Caco-2 (cell line): ENCODE measurements at regions of chr20 and their contacts with region 1.

Region 1: GRCh38 chr20:22691369-22692118 is 107.2 kb upstream of the FOXA2 start:
- DNase-seq: peak; percentile 81 to 83
- H3K4me3 ChIP-seq: no peak overlapping the region
- H3K4me3 Mint-ChIP-seq: no peak overlapping the region
- H3K27ac Mint-ChIP-seq: no peak overlapping the region
- H3K4me1 ChIP-seq: peaks cover 6% of the 10 kb centered on the region; the same call in 1 of the 2 replicates
- H3K4me1 Mint-ChIP-seq: peaks cover 2% of the 10 kb centered on the region
- H3K27me3 ChIP-seq: no peaks in the 10 kb centered on the region
- H3K27me3 Mint-ChIP-seq: no peaks in the 10 kb centered on the region
- CTCF ChIP-seq: peak; percentile 83 to 96

Region 2: GRCh38 chr20:22805219-22805618 is 113.7 kb after region 1 on chr20:
- CTCF ChIA-PET with region 1: interaction called, 5 read pairs
- POLR2A ChIA-PET with region 1: interaction called, 3 read pairs
- intact Hi-C with region 1: loop called (anchors 5 kb)
- DNase-seq: peak in 1 of 2 experiments; percentile 29
- H3K4me3 ChIP-seq: no peak overlapping the region
- H3K4me3 Mint-ChIP-seq: no peak overlapping the region
- H3K27ac Mint-ChIP-seq: no peak overlapping the region
- H3K4me1 ChIP-seq: peaks cover 38% of the 10 kb centered on the region
- H3K4me1 Mint-ChIP-seq: peaks cover 36% of the 10 kb centered on the region
- H3K27me3 ChIP-seq: no peaks in the 10 kb centered on the region
- H3K27me3 Mint-ChIP-seq: no peaks in the 10 kb centered on the region
- CTCF ChIP-seq: no peak

Region 3: GRCh38 chr20:22833851-22834250 is 142.3 kb after region 1 on chr20:
- CTCF ChIA-PET with region 1: no interaction called
- POLR2A ChIA-PET with region 1: no interaction called
- intact Hi-C with region 1: no loop called
- DNase-seq: peak; percentile 31 to 61
- H3K4me3 ChIP-seq: no peak overlapping the region
- H3K4me3 Mint-ChIP-seq: peak overlapping the region; percentile 9
- H3K27ac Mint-ChIP-seq: peak overlapping the region; percentile 12
- H3K4me1 ChIP-seq: peaks cover 43% of the 10 kb centered on the region
- H3K4me1 Mint-ChIP-seq: peaks cover 43% of the 10 kb centered on the region
- H3K27me3 ChIP-seq: no peaks in the 10 kb centered on the region
- H3K27me3 Mint-ChIP-seq: no peaks in the 10 kb centered on the region
- CTCF ChIP-seq: no peak

Region 4: DNA sequence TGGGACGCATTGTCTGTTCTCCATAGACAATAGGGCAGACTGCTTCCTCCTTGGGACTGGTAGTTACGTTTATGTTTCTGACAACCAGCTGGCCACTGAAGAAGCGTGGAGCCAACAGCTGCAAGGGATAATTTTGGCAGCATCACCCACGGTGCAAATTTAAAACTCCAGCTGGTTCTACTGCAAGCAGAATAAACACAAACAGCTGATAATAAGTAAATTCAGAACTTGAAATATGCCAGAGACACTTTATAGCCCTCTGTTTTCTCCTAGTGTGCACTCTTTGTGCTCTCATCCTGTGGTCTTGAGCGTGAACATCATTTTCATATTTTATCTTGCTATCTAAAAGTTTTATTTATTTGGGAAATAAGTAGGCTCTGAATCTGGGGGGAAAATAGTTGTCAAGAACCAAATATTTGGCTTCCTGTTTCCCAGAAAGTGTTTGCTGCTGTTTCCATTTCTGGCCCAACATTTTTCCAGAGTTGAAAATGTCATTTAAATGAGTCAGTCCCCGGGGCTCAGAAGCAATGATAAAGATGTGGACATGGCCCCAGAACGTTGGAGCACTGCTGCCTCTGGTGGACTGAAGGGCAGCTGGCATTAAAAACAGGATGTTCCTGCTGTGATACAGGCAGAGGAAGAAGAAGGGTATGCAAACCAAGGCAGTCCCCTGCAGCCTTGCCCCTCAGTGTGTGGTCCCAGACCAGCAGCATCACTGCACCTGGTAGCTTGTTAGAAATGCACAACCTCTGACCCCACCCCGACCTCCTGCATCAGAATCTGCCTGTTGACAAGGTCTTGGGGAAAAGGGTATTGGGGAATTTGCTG is 370.4 kb after region 1 on chr20:
- CTCF ChIA-PET with region 1: interaction called, 8 read pairs
- POLR2A ChIA-PET with region 1: no interaction called
- intact Hi-C with region 1: loop called (anchors 5 kb)
- DNase-seq: peak; percentile 49 to 53
- H3K4me3 ChIP-seq: no peak overlapping the region
- H3K4me3 Mint-ChIP-seq: no peak overlapping the region
- H3K27ac Mint-ChIP-seq: peak overlapping the region; percentile 39
- H3K4me1 ChIP-seq: peaks cover 58% of the 10 kb centered on the region
- H3K4me1 Mint-ChIP-seq: peaks cover 40% of the 10 kb centered on the region
- H3K27me3 ChIP-seq: no peaks in the 10 kb centered on the region
- H3K27me3 Mint-ChIP-seq: no peaks in the 10 kb centered on the region
- CTCF ChIP-seq: peak; percentile 35 to 39

Region 5: GRCh38 chr20:23340524-23340923 is 649.0 kb after region 1 on chr20:
- CTCF ChIA-PET with region 1: interaction called, 36 read pairs
- POLR2A ChIA-PET with region 1: no interaction called
- intact Hi-C with region 1: loop called (anchors 1 kb)
- DNase-seq: peak; percentile 84 to 86
- H3K4me3 ChIP-seq: no peak overlapping the region
- H3K4me3 Mint-ChIP-seq: no peak overlapping the region
- H3K27ac Mint-ChIP-seq: no peak overlapping the region
- H3K4me1 ChIP-seq: peaks cover 8% of the 10 kb centered on the region; the same call in 1 of the 2 replicates
- H3K4me1 Mint-ChIP-seq: peaks cover 12% of the 10 kb centered on the region
- H3K27me3 ChIP-seq: no peaks in the 10 kb centered on the region
- H3K27me3 Mint-ChIP-seq: no peaks in the 10 kb centered on the region
- CTCF ChIP-seq: peak; percentile 82 to 87